Activated T-helper 1 cell treated with anti-CD3 and anti-CD28 coated beads, Interleukin-12 subunit alpha, Interleukin-12 subunit beta, Interleukin-2, Interleukin-4 antibody, amounts not matched to agents 30 ng/mL and 10 ng/mL and 1 ng/mL, durations not matched to agents 14 hours and 24 hours and 36 hours (primary cell): ENCODE measurements at regions of chr12 and their contacts with region 1.

Region 1: DNA sequence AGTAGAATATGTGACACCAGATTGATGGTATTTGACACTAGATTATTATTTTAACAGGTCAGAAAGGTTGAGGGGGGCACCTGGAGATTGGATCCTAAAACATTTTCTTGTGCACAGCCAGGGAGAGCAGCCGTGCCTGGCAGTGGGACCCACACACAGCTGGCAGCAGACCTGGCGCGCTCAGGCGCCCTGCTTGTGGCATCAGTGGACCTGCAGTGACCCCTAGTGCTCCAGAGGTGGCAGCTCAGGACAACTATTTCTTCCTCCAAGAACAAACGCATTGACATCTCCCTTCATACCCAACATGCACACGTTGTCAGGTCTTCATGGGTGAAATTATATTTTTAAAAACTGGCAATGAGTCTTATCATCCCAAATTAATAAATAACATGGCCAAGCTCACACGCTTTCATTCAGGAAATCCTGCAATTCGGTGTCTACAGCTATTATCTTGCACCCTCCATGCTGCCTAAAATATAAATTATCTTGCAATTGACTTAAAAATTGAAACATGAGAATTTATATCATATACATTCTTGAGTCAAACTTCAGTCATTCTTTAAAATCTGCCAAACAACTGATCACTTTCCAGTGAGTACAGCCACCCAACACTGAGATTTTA is 7.7 kb upstream of the TMEM132D start:
- DNase-seq: peak; percentile 3
- H3K4me3 Mint-ChIP-seq: no peak overlapping the region
- H3K27ac Mint-ChIP-seq: no peak overlapping the region
- H3K4me1 Mint-ChIP-seq: no peaks in the 10 kb centered on the region
- H3K27me3 Mint-ChIP-seq: peaks cover 2% of the 10 kb centered on the region

Region 2: GRCh38 chr12:128969480-128970055 is 942.0 kb before region 1 on chr12:
- intact Hi-C with region 1: loop called (anchors 2 kb)
- DNase-seq: no peak
- H3K4me3 Mint-ChIP-seq: peak overlapping the region; percentile 22
- H3K27ac Mint-ChIP-seq: no peak overlapping the region
- H3K4me1 Mint-ChIP-seq: peaks cover 12% of the 10 kb centered on the region
- H3K27me3 Mint-ChIP-seq: peaks cover 10% of the 10 kb centered on the region

Region 3: DNA sequence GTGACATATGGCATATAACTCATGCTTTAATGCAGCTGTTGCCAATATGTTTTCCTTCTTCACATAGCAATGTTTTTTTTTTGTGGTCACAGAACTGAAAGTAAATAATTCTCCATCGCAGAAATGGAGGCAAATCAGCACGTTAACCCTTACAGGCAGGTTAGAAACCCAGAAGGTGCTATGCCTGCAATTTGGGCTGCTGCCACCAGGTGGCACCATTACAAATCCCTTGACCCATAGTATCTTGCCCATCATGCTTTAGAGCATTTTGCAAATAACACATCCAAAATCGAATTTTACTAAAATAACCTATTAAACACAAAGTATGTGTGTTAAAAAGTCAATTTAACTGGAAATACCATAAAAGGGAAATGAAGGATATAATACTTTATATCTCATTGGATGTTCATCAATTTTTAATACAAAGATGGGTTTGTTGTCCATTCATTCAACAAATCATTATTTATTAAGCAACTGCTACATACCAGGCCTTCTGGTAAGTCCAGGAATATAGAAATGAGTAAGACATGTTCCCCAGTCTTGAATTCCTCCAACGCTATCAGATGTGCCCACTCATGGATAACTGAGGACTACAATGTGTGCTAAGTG is 718.2 kb before region 1 on chr12:
- intact Hi-C with region 1: loop called (anchors 2 kb)
- DNase-seq: no peak
- H3K4me3 Mint-ChIP-seq: no peak overlapping the region
- H3K27ac Mint-ChIP-seq: no peak overlapping the region
- H3K4me1 Mint-ChIP-seq: no peaks in the 10 kb centered on the region
- H3K27me3 Mint-ChIP-seq: no peaks in the 10 kb centered on the region

Region 4: DNA sequence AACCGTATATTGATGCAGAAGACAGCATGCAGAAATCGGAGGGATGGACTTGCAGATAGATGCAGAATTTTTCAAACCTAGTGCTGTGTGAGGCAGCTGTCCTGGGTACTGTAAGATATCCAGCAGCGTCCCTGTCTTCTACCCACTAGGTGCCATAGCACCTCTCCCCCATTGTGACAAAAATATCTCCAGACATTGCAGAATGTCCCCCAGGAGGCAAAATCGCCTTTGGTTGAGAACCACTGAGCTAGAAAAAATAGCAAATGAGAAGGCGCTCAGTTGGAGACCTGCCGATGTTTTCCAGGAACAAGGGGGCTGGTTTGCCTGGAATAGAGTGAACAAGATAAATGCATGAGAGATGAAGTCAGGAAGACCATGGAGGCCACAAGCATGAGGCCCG is 60.2 kb after region 1 on chr12:
- intact Hi-C with region 1: no loop called
- DNase-seq: no peak
- H3K4me3 Mint-ChIP-seq: no peak overlapping the region
- H3K27ac Mint-ChIP-seq: no peak overlapping the region
- H3K4me1 Mint-ChIP-seq: no peaks in the 10 kb centered on the region
- H3K27me3 Mint-ChIP-seq: no peaks in the 10 kb centered on the region